Activated CD4-positive, alpha-beta T cell treated with anti-CD3 and anti-CD28 coated beads for 36 hours (primary cell): ENCODE measurements at regions of chr1 and their contacts with region 1.

Region 1: GRCh38 chr1:183471743-183472487 is 384 bp upstream of the SMG7 start:
- DNase-seq: peak; percentile 99
- ATAC-seq: peak; percentile 61
- H3K4me3 Mint-ChIP-seq: peak overlapping the region; percentile 86
- H3K27ac Mint-ChIP-seq: peak overlapping the region; percentile 99
- H3K4me1 Mint-ChIP-seq: peaks cover 26% of the 10 kb centered on the region
- H3K27me3 Mint-ChIP-seq: no peaks in the 10 kb centered on the region

Region 2: DNA sequence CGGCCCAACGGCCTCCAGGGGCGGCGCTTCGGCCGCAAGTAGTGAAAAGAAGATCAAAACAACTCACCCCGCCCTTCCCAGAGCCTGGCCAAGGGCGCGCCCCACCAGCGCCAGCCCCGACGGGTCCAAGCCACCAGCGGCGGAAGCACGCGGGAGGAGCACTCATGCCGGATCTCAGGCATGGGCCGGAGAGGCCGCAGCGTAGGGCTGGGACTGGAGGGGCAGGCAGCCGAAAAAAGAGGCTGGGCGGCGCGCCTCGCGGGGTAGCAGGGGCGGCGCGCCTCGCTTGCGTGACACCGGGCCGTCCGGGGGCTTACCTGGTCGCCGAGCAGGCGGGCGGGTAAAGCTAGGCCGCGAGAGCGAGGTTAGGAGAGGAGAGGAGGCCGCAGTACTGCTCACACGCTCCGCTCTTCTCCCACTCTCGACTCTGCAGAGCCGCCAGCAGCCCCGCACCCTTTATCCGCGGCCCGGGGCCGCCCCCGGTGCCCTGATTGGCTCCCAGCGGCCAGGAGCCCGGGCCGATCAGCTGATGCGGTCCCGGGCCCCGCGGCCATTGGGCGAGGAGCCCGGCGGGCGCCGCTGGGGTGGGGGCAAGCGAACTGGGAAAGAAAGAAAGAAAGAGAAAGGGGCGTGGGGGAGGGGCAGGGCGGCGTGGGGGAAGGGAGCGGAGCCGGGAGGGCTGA is 1080.4 kb before region 1 on chr1 and contains the start of gene GLUL:
- CTCF ChIA-PET with region 1: no interaction called
- POLR2A ChIA-PET with region 1: no interaction called
- intact Hi-C with region 1: loop called in 1 of 2 experiments (anchors 5 kb)
- DNase-seq: peak; percentile 81
- ATAC-seq: peak; percentile 89
- H3K4me3 Mint-ChIP-seq: peak within 1 kb of the TSS; percentile 86
- H3K27ac Mint-ChIP-seq: peak within 1 kb of the TSS; percentile 80
- H3K4me1 Mint-ChIP-seq: peaks cover 20% of the 10 kb centered on the region
- H3K27me3 Mint-ChIP-seq: peaks cover 13% of the 10 kb centered on the region
- total RNA-seq, gene GLUL: 63.5 to 87.5 TPM

Region 3: DNA sequence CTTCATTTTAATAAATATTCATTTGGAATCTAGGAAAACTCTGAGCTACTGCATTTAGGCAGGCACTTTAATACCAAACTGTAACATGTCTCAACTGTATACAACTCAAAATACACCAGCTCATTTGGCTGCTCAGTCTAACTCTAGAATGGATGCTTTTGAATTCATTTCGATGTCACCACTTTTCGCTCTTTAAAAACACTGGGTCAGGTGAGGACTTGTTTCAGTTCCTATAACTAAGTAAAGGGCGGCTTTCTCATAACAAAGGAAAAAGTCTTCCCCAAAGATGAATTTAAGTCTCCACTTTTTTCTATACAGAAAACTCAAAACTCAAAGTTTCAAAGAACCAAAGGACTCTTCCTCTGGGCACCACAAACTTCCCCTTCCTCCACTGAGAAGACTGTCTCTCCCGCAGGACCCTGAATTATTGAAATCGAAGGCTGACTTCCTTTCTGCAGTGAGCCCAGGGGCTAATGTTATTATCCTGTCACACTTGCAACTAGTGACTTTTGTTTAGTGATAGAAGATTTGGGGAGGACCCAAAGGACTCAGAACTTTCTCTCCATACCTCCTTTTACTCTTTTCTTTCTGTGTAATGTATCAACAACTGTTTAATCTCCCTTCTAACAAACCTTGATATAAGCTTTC is 642.5 kb before region 1 on chr1:
- CTCF ChIA-PET with region 1: no interaction called
- POLR2A ChIA-PET with region 1: no interaction called
- intact Hi-C with region 1: no loop called
- DNase-seq: no peak
- ATAC-seq: no peak
- H3K4me3 Mint-ChIP-seq: no peak overlapping the region
- H3K27ac Mint-ChIP-seq: no peak overlapping the region
- H3K4me1 Mint-ChIP-seq: no peaks in the 10 kb centered on the region
- H3K27me3 Mint-ChIP-seq: no peaks in the 10 kb centered on the region

Region 4: DNA sequence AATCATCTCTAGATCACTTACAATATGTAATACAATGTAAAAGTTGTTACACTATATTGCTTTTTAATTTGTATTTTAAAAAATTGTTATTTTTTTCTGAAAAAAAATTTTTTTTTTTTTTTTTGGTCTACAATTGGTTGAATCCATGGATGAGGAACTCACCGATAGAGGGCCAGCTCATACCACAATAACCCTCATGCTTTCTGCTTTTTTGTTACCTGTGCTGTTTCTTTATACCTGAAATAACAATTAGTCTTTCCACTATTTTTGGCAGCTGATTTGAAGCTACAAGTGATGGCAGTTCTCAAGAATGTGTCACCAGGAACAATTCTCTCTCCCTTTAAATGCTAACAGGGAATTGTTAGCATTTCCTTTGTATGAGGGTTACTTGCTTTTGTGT is 12.3 kb after region 1 on chr1:
- CTCF ChIA-PET with region 1: interaction called, 13 read pairs
- POLR2A ChIA-PET with region 1: no interaction called
- intact Hi-C with region 1: no loop called
- DNase-seq: no peak
- ATAC-seq: no peak
- H3K4me3 Mint-ChIP-seq: no peak overlapping the region
- H3K27ac Mint-ChIP-seq: no peak overlapping the region
- H3K4me1 Mint-ChIP-seq: peaks cover 58% of the 10 kb centered on the region
- H3K27me3 Mint-ChIP-seq: no peaks in the 10 kb centered on the region

Region 5: GRCh38 chr1:183622884-183623785 is 151.2 kb after region 1 on chr1:
- CTCF ChIA-PET with region 1: interaction called, 3 read pairs
- POLR2A ChIA-PET with region 1: no interaction called
- intact Hi-C with region 1: loop called (anchors 1 to 2 kb)
- DNase-seq: peak; percentile 71
- ATAC-seq: peak; percentile 97
- H3K4me3 Mint-ChIP-seq: no peak overlapping the region
- H3K27ac Mint-ChIP-seq: peak overlapping the region; percentile 22
- H3K4me1 Mint-ChIP-seq: peaks cover 17% of the 10 kb centered on the region
- H3K27me3 Mint-ChIP-seq: no peaks in the 10 kb centered on the region

Region 6: GRCh38 chr1:184051485-184052193 is 579.7 kb after region 1 on chr1 and contains the start of gene TSEN15:
- CTCF ChIA-PET with region 1: no interaction called
- POLR2A ChIA-PET with region 1: no interaction called
- intact Hi-C with region 1: loop called (anchors 1 to 5 kb)
- DNase-seq: peak; percentile 89
- ATAC-seq: peak; percentile 97
- H3K4me3 Mint-ChIP-seq: peak within 1 kb of the TSS; percentile 93
- H3K27ac Mint-ChIP-seq: peak within 1 kb of the TSS; percentile 99
- H3K4me1 Mint-ChIP-seq: peaks cover 33% of the 10 kb centered on the region
- H3K27me3 Mint-ChIP-seq: peaks cover 9% of the 10 kb centered on the region
- total RNA-seq, gene TSEN15: 44.1 to 47.3 TPM

Region 7: DNA sequence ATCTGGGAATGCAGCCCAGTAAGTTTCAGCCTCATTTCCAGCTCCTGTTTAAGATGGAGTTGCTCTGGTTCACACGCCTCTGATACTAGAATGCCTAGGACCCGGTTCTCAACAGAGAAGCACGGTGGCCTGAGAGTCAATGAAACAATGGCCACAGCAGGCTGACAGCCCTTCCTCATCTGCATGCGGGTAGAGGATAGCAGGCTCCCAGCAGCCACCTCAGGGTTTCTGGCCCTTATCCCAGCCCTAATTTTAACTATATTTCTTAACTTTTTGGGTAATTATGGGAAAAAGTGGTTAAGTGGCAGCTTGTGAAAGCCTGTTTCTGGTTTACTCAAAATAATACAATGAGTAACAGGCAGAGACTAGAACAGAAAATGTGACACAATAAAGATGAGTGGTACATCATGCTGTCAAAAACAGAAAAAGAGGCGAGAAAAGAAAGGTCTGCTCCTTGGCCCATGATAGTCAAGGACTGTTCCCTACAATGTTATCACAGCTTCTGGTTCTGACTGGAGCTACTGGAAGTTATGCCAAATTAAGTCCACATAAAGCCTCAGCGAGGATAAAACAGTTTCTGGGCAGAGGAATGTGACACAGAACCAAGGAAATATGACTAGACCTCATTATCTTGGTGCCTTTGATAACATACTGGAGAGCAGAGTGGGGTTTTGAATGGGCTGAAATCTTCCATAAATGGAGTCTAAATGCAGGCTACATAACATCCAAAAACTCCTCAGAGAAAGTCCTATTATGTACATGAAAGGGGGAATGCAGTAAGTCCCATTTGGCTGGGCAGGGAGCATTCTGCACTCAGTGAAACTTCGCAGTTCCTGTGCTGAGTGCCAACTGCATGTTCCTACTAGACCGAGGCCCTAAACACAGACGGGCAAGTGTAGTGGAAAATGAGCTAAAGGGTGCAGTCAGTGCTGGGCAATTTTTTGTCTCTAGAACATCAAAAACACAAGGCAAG is 1410.3 kb after region 1 on chr1:
- CTCF ChIA-PET with region 1: no interaction called
- POLR2A ChIA-PET with region 1: no interaction called
- intact Hi-C with region 1: loop called in 1 of 2 experiments (anchors 10 kb)
- DNase-seq: peak; percentile 50
- ATAC-seq: peak; percentile 79
- H3K4me3 Mint-ChIP-seq: peak overlapping the region; percentile 5
- H3K27ac Mint-ChIP-seq: peak overlapping the region; percentile 90
- H3K4me1 Mint-ChIP-seq: peaks cover 27% of the 10 kb centered on the region
- H3K27me3 Mint-ChIP-seq: peaks cover 6% of the 10 kb centered on the region